Activated CD4-positive, alpha-beta memory T cell treated with anti-CD3 and anti-CD28 coated beads, Interleukin-2, amount 10 ng/mL, durations not matched to agents 7 days and 5 days (primary cell): ENCODE measurements at regions of chr7 and their contacts with region 1.

Region 1: GRCh38 chr7:66114793-66115649 is at the start of gene CRCP:
- DNase-seq: peak; percentile 84
- H3K4me3 Mint-ChIP-seq: peak within 1 kb of the TSS; percentile 95
- H3K27ac Mint-ChIP-seq: peak within 1 kb of the TSS; percentile 91
- H3K4me1 Mint-ChIP-seq: peaks cover 46% of the 10 kb centered on the region
- H3K27me3 Mint-ChIP-seq: no peaks in the 10 kb centered on the region
- total RNA-seq, gene CRCP: 23.6 to 24.0 TPM

Region 2: DNA sequence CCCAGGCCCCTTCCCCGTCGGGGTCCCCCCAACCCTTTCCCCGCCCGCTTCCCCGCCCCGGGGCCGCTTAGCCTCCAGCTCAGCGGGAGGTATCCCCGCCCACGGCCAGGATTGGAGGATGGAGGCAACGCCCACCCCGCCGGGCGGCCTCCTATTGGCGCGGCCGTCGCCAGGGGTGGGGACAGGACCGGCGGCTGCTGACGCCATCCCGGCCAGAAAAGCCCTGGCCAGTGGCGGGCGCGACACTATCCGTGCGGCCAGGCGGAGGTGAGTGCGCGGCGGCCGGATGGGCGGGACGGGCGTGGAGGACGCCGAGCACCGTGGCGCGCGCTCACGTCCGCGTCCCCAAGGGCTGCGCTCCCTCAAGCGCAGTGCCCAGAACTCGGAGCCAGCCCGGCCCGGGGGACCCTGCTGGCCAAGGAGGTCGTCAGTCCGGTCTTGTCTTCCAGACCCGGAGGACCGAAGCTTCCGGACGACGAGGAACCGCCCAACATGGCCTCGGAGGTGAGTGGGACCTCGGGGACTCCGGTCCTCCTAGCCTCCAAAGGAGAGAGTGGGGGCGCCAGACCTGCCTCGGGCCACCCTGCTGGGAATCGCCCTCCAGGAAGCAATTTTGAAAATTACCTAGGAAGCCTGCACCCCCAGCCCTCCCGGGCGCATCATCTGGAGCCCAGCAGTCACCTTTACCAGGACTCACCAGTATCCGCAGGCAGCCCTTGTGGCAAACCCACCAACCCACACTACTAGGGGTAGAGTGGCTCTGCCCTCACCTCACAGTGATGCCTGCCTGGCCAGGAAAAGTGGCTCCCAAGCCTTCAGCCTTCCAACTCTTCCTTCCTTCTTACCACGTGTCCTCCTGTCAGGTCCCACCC is 39.2 kb before region 1 on chr7 and contains the start of gene ASL:
- CTCF ChIA-PET with region 1: interaction called, 4 read pairs
- POLR2A ChIA-PET with region 1: interaction called, 13 read pairs
- DNase-seq: peak; percentile 92
- H3K4me3 Mint-ChIP-seq: peak within 1 kb of the TSS; percentile 77
- H3K27ac Mint-ChIP-seq: peak within 1 kb of the TSS; percentile 62
- H3K4me1 Mint-ChIP-seq: peaks cover 20% of the 10 kb centered on the region
- H3K27me3 Mint-ChIP-seq: peaks cover 1% of the 10 kb centered on the region
- total RNA-seq, gene ASL: 29.8 to 30.6 TPM

Region 3: DNA sequence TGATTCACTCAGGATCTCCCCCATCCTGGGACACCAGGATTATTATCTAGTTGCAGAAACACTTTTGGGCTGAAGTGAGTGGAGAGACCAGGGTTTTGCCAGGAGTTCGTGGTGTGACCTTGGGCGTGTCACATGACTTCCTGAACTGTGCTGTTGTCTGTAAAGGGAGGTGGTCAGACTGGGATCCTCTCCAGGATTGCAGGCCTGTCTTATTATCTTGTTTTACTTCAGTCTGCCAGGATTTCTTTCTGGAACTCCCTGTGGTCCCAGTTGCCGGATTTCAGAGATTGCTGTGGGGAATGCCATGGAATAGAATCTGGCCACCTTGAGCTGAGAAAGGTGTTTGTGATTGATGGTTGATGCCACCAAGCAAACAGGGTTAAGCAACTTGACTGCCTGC is 35.5 kb after region 1 on chr7:
- CTCF ChIA-PET with region 1: interaction called, 4 read pairs
- POLR2A ChIA-PET with region 1: interaction called, 12 read pairs
- DNase-seq: peak; percentile 25
- H3K4me3 Mint-ChIP-seq: no peak overlapping the region
- H3K27ac Mint-ChIP-seq: peak overlapping the region; percentile 69
- H3K4me1 Mint-ChIP-seq: peaks cover 33% of the 10 kb centered on the region
- H3K27me3 Mint-ChIP-seq: no peaks in the 10 kb centered on the region

Region 4: DNA sequence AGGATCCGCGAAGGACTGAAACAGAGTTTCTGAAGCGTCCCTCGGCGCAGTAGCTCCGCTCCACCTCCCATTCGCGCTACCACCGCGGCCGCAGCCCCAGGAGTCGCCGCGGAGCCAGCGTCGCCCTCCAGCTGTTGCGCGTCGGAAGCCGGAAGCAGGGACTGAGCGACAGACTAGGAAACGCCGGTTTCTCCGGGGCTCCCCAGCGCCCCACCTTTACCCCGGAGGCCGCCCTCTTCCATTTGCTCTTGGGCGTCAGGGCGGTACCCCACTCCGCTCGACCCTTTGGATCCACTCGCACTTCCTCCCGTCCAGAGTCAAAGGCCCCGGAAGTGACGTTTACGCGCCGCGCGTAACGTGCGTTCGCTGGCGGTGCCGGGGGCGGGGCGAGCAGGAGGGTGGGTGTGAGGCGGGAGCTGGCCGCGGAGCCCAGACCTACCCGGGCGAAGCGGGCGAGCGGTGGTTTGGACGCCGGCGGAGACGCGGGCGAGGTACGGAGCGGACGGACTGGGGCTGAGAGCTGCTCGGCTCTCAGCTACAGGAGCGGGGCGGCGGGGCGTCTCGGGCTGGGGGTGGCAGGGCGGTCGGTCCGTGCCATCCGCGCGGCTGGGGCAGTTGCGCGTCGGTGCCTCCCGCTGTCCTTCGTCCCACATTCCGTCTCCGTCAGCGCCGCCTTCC is 625.4 kb after region 1 on chr7 and contains the start of gene RABGEF1:
- CTCF ChIA-PET with region 1: no interaction called
- POLR2A ChIA-PET with region 1: interaction called, 12 read pairs
- DNase-seq: peak; percentile 97
- H3K4me3 Mint-ChIP-seq: peak within 1 kb of the TSS; percentile 93
- H3K27ac Mint-ChIP-seq: peak within 1 kb of the TSS; percentile 96
- H3K4me1 Mint-ChIP-seq: peaks cover 38% of the 10 kb centered on the region
- H3K27me3 Mint-ChIP-seq: no peaks in the 10 kb centered on the region
- total RNA-seq, gene RABGEF1: 22.1 to 24.2 TPM